ENCODE measurements at regions of chr9 and their contacts with region 1.

Region 1: DNA sequence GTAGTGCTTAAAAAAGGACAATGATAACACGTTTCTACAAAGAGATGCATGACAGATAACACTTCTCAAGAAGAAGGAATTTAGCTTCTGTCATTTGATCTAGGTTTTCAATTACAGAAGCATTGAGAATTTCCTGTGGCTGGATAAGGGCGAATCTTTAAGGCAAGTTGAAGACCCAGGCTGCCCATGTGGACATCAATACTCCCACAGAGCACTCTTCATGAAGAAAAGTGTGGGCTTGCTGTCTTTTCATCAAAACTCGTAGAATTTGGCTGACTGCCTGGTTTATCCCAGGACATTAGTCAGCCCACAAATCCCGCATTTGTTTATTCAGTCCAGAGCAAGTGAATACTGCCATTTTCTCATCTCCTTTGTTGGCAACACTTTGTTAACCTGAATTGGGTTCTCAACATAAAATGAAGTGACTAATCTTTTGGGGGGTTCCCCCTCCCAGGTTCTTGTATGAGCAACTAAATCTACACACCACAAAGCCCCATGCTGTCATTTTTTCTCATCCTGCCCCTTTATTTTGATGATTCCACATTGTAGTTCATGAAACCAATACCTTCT is 43.4 kb upstream of the CDKN2B start:
- DNase-seq: peak; percentile 57
- ATAC-seq: peak; percentile 96
- H3K4me3 Mint-ChIP-seq: no peak overlapping the region
- H3K27ac Mint-ChIP-seq: no peak overlapping the region
- H3K4me1 Mint-ChIP-seq: peaks cover 30% of the 10 kb centered on the region
- H3K27me3 Mint-ChIP-seq: peaks cover 13% of the 10 kb centered on the region

Region 2: DNA sequence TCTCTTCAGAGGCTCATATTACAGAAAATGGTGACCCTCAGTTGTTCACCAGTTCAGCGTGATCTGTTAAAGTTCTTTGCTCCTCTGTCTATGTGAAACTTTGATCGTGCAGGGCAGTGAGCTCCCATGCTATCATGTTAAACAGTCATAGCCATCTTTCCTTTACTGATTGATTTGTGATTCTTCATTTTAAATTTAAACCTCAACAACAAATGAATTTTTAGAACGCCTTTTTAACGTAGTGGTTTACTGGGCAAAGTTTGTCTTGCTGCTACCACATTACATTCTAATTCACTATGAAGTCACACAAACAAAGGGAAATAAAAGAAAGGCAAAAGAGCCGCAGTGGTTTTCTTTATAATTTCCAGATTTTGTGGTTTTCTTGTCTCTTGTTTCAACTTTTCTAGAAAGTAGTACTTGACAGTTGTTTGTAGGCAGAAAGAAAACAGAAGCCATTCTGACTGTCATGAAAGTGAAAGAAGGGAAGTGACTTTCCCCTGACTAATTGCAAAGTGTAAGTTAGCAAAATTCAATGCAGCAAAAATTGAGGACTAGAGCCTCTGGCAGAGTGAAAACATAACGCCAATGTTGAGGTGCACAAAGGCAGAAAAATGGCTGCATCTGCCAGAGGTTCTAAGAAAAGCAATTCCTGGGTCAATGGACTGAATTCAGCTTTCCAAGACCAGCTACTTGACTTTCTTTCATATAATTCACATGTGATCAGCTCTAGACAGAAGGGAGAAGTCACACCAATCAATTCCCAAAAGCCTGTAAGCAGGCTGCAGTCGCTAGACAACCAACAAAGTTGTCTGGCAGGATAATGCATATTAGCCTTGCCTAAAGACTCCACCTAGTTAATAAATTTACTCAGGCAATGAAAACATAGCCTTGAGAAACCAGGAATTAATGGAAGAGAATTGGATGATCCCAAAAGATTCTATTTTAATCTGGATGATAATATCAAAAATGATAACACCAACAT is 694.7 kb before region 1 on chr9:
- CTCF ChIA-PET with region 1: no interaction called
- POLR2A ChIA-PET with region 1: no interaction called
- intact Hi-C with region 1: loop called (anchors 1 to 10 kb)
- DNase-seq: peak; percentile 40
- ATAC-seq: peak; percentile 94
- H3K4me3 Mint-ChIP-seq: peak overlapping the region; percentile 35
- H3K27ac Mint-ChIP-seq: peak overlapping the region; percentile 70
- H3K4me1 Mint-ChIP-seq: peaks cover 19% of the 10 kb centered on the region
- H3K27me3 Mint-ChIP-seq: peaks cover 18% of the 10 kb centered on the region

Region 3: DNA sequence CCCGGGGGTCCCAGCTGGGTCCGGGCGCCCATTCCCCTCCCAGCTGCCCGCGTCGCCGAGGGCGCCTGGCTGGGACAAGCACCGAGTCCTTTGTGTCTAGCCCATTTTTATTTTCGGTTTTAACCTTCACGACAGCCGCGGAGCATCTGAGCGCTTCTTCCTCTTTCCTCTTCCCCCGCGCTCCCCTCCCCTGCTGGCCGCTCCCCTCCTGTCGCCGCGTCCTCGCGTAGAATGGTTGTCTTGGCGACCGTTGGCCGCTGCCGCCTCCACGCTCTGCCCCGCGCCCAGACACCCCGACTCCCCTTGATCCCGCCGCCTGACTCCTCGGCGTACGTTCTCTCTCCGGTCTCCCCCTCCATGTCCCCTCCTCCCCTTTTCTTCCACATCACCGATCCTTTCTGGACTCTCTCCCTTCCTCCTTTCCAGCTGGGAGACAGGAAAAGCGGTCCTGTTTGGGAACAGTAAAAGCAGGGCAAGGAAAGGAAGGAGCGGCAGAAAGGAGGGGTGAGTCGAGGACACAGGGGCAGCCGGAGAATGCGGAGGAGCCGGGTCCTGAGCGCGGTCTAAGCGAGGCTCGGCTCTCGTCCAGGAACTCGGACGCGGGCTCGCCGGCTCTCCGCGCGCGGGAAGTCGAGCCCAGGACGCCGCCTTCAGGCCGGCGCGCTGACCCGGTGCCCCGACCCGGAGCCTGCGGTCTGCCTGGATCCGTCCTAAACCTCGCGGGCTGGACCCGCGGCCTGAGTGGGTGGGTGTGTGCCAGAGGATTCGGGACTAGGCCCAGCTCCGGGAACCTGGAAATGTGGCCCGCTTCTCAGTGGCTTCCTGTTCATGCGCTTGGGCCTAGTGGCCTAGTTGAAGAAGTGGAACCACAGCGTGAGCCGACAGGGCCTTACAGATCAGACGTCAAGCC is 57.0 kb before region 1 on chr9:
- CTCF ChIA-PET with region 1: no interaction called
- POLR2A ChIA-PET with region 1: no interaction called
- intact Hi-C with region 1: no loop called
- DNase-seq: peak; percentile 82
- ATAC-seq: peak; percentile 75
- H3K4me3 Mint-ChIP-seq: peak overlapping the region; percentile 90
- H3K27ac Mint-ChIP-seq: peak overlapping the region; percentile 37
- H3K4me1 Mint-ChIP-seq: peaks cover 8% of the 10 kb centered on the region
- H3K27me3 Mint-ChIP-seq: peaks cover 37% of the 10 kb centered on the region

Region 4: DNA sequence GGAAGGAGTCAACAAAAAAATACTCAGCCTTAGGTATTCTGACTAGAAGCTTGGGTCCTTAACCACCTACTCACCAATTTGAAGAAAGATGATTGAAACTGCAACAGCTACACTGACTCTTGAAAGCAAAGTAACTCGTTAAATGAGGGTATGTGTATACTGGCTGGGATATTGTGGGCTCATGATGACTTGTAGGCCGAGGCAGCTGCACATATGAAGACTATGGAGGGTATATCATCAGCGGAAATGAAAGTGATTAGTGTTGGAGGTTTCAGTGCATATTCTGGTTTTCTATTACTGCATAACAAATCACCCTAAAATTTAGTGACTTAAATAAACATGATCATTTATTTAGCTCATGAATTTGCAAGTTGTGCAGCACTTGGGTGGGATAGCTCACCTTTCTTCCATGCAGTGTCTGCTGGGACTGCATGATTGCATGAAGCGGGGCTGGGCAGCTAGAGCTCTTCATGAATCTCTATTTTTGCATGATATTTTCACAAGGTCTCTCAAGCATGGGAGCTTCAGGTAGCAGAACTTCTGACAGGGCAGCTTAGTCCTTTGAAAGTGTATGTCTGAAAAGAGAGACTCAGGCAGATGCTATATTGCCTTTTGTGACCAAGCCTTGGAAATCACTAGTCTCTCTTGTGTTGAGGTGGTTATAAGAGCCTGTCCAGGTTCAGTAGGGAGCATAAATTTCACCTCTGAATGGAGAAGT is 52.7 kb after region 1 on chr9:
- CTCF ChIA-PET with region 1: no interaction called
- POLR2A ChIA-PET with region 1: no interaction called
- intact Hi-C with region 1: loop called in 1 of 2 experiments (anchors 5 kb)
- DNase-seq: peak; percentile 31
- ATAC-seq: peak; percentile 96
- H3K4me3 Mint-ChIP-seq: no peak overlapping the region
- H3K27ac Mint-ChIP-seq: no peak overlapping the region
- H3K4me1 Mint-ChIP-seq: peaks cover 12% of the 10 kb centered on the region
- H3K27me3 Mint-ChIP-seq: peaks cover 14% of the 10 kb centered on the region

Region 5: GRCh38 chr9:22208846-22209585 is 156.6 kb after region 1 on chr9:
- CTCF ChIA-PET with region 1: no interaction called
- POLR2A ChIA-PET with region 1: no interaction called
- intact Hi-C with region 1: loop called (anchors 1 kb)
- DNase-seq: peak; percentile 25
- ATAC-seq: peak; percentile 92
- H3K4me3 Mint-ChIP-seq: no peak overlapping the region
- H3K27ac Mint-ChIP-seq: no peak overlapping the region
- H3K4me1 Mint-ChIP-seq: peaks cover 28% of the 10 kb centered on the region
- H3K27me3 Mint-ChIP-seq: peaks cover 5% of the 10 kb centered on the region

Region 6: GRCh38 chr9:22238809-22239684 is 186.6 kb after region 1 on chr9:
- CTCF ChIA-PET with region 1: interaction called, 3 read pairs
- POLR2A ChIA-PET with region 1: no interaction called
- intact Hi-C with region 1: loop called (anchors 2 to 10 kb)
- DNase-seq: no peak
- ATAC-seq: peak; percentile 34
- H3K4me3 Mint-ChIP-seq: no peak overlapping the region
- H3K27ac Mint-ChIP-seq: no peak overlapping the region
- H3K4me1 Mint-ChIP-seq: peaks cover 37% of the 10 kb centered on the region
- H3K27me3 Mint-ChIP-seq: peaks cover 19% of the 10 kb centered on the region

Measured in activated CD4-positive, alpha-beta T cell treated with anti-CD3 and anti-CD28 coated beads for 36 hours (primary cell).